ENCODE measurements at regions of chr2 and their contacts with region 1.

Region 1: DNA sequence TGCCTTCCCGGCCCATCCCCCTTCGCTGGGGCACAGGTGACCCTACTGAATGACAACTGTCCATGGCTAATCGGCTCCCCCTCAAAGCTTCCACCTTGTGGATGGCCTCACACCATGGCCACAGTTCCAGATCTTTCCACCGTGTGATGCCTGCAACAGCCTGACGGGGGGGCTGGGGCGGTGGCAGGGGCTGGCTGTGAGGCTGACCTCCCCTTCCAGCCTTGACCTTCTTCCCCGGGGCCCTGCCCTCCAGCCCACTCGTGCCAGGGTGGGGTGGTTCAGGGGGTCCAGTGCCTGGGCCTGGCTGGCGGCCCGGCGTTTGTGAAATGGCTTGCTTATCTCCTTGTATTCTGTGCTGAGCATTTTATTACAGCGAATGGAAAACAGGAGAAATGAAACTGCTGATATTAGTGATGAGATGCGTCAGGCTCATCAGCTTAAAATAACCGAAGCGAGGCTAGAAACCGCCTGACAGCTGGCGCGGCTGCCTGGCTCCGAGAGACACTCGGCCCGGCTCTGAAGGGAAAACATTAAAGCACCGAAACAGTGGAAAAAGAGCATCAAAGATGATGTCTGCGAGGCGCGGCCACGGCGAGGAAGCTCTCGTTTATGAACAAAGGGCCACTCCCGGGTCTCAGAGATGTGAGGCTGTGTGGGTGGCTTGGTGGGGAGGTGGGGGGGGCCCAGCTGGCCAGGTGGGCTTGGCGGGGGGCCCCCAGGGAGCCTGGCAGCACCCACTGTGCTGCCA is 916 bp upstream of the PDCD1 start:
- DNase-seq: peak; percentile 44 to 71 (median 60)
- ATAC-seq: peak; percentile 88
- H3K4me3 ChIP-seq: no peak overlapping the region
- H3K27ac ChIP-seq: no peak overlapping the region
- H3K4me1 ChIP-seq: peaks cover 5 to 70% of the 10 kb centered on the region in 2 experiments; a peak in 4 of 5 replicates
- H3K27me3 ChIP-seq: peaks cover 0 to 4% of the 10 kb centered on the region in 2 experiments; a peak in 2 of 5 replicates
- CTCF ChIP-seq: peak; percentile 32 to 54 (median 41); a peak in 5 of 6 replicates
- EP300 ChIP-seq: no peak
- POLR2A ChIP-seq: no peak
- RAD21 ChIP-seq: no peak

Region 2: DNA sequence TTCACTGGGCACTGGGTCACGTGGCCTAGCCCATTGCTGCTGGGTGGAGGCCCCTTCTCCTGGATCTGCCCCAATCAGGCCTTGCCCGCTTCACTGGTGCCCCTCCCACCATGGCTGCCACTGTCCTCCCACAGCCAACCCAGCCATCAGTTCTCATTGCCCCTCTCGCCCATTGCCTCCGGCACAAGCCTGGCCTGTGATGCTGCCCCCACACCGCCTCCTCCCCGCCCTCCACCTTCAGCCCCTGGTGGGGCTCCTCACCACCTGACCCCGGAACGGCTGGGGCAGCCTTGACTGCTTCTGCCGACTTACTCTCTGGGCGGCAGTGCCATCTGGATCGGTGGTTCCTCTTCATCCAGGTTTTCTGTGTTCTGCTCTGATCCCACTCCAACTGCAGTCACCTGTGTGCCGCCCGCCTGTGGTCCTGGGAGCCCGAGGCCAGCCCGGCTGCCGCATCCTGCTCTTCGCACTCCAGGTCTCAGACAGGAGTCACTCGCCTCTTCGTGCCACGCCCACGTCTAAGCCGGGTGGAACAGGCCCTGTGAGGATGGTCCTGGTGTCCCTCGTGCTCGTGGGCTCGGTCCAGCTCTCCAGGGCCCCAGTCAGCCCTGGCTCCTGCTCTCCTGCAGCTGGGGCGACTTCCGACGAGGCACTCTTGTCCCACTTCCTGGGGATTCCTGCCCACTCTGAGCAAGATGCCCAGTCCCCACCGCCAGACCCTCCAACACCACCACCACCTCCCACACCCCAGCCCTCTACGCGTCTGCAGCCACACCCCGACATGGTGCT is 110.9 kb before region 1 on chr2:
- CTCF ChIA-PET with region 1: no interaction called
- POLR2A ChIA-PET with region 1: no interaction called
- in situ Hi-C with region 1: loop called (anchors 5 kb)
- intact Hi-C with region 1: no loop called
- DNase-seq: no peak
- ATAC-seq: no peak
- H3K4me3 ChIP-seq: no peak overlapping the region
- H3K27ac ChIP-seq: no peak overlapping the region
- H3K4me1 ChIP-seq: peaks cover 0 to 2% of the 10 kb centered on the region in 2 experiments; a peak in 2 of 5 replicates
- H3K27me3 ChIP-seq: no peaks in the 10 kb centered on the region
- CTCF ChIP-seq: no peak
- EP300 ChIP-seq: no peak
- POLR2A ChIP-seq: no peak
- RAD21 ChIP-seq: no peak